ENCODE measurements at regions of chr1 and their contacts with region 1.

Region 1: GRCh38 chr1:48236716-48237470 is 14.4 kb downstream of the SLC5A9 start:
- DNase-seq: no peak
- ATAC-seq: no peak
- H3K4me3 Mint-ChIP-seq: no peak overlapping the region
- H3K27ac Mint-ChIP-seq: no peak overlapping the region
- H3K4me1 Mint-ChIP-seq: no peaks in the 10 kb centered on the region
- H3K27me3 Mint-ChIP-seq: no peaks in the 10 kb centered on the region
- CTCF ChIP-seq: peak; percentile 66

Region 2: DNA sequence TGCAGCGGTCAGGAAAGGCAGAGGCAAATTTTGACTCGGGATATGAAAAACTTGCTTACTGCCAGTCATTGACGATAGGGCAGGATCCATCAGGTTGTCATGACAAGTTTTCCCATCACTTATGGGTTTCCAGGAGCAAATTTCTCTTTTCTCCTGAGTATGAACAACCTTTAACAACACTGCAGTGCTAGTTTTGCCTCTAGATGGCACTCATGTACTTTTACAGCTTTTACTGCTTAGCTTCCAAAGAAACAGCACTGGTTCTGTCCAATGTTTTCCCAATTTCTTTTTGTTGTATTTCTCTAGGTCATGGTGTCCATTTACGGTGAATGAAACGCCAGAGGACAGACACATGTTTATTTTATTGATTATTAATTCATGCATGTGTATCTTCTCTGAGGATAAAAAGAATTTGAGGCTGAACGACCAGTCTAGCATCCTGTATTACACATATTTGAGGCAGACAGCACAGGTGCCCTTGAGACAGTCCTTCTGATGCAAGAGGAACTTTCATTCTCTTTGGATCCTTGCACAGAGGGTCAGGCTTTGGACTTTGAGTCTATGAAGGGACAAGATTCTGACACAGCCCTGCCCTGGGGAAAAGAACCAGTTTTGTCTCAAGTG is 127.4 kb before region 1 on chr1:
- CTCF ChIA-PET with region 1: interaction called, 7 read pairs
- POLR2A ChIA-PET with region 1: no interaction called
- intact Hi-C with region 1: loop called (anchors 5 kb)
- DNase-seq: no peak
- ATAC-seq: no peak
- H3K4me3 Mint-ChIP-seq: no peak overlapping the region
- H3K27ac Mint-ChIP-seq: no peak overlapping the region
- H3K4me1 Mint-ChIP-seq: peaks cover 4% of the 10 kb centered on the region
- H3K27me3 Mint-ChIP-seq: peaks cover 7% of the 10 kb centered on the region
- CTCF ChIP-seq: peak; percentile 73

Region 3: GRCh38 chr1:48430832-48431231 is 193.9 kb after region 1 on chr1:
- CTCF ChIA-PET with region 1: no interaction called
- POLR2A ChIA-PET with region 1: no interaction called
- intact Hi-C with region 1: no loop called
- DNase-seq: no peak
- ATAC-seq: no peak
- H3K4me3 Mint-ChIP-seq: no peak overlapping the region
- H3K27ac Mint-ChIP-seq: no peak overlapping the region
- H3K4me1 Mint-ChIP-seq: no peaks in the 10 kb centered on the region
- H3K27me3 Mint-ChIP-seq: peaks cover 1% of the 10 kb centered on the region
- CTCF ChIP-seq: no peak

Measured in activated CD8-positive, alpha-beta T cell treated with anti-CD3 and anti-CD28 coated beads for 36 hours (primary cell).